AG04450 (cell line): ENCODE measurements at regions of chr3 and their contacts with region 1.

Region 1: GRCh38 chr3:111989061-111989678 is 9.6 kb upstream of the TAGLN3 start:
- DNase-seq: peak; percentile 32
- H3K4me3 ChIP-seq: no peak overlapping the region
- H3K27ac ChIP-seq: no peak overlapping the region
- H3K27me3 ChIP-seq: no peaks in the 10 kb centered on the region
- CTCF ChIP-seq: peak; percentile 83

Region 2: GRCh38 chr3:111978493-111979433 is 10.4 kb before region 1 on chr3 and contains the start of gene ABHD10:
- CTCF ChIA-PET with region 1: interaction called, 29 read pairs
- POLR2A ChIA-PET with region 1: interaction called, 4 read pairs
- DNase-seq: peak; percentile 97
- H3K4me3 ChIP-seq: peak within 1 kb of the TSS; percentile 92
- H3K27ac ChIP-seq: peak within 1 kb of the TSS; percentile 47
- H3K27me3 ChIP-seq: no peaks in the 10 kb centered on the region
- CTCF ChIP-seq: no peak
- polyA plus RNA-seq, gene ABHD10: 28.8 and 37.5 TPM in 2 replicates

Region 3: GRCh38 chr3:112007633-112008032 is 18.5 kb after region 1 on chr3:
- CTCF ChIA-PET with region 1: interaction called, 169 read pairs
- POLR2A ChIA-PET with region 1: no interaction called
- DNase-seq: no peak
- H3K4me3 ChIP-seq: no peak overlapping the region
- H3K27ac ChIP-seq: no peak overlapping the region
- H3K27me3 ChIP-seq: no peaks in the 10 kb centered on the region
- CTCF ChIP-seq: no peak

Region 4: GRCh38 chr3:112247900-112248299 is 258.7 kb after region 1 on chr3:
- CTCF ChIA-PET with region 1: no interaction called
- POLR2A ChIA-PET with region 1: no interaction called
- DNase-seq: no peak
- H3K4me3 ChIP-seq: no peak overlapping the region
- H3K27ac ChIP-seq: no peak overlapping the region
- H3K27me3 ChIP-seq: no peaks in the 10 kb centered on the region
- CTCF ChIP-seq: no peak